Dorsolateral prefrontal cortex (tissue), 120 donors: ENCODE measurements at regions of chr7 and their contacts with region 1.

Region 1: GRCh38 chr7:87202705-87203104 is 16.8 kb downstream of the TMEM243 start:
- DNase-seq: no peak
- H3K4me3 ChIP-seq: no peak overlapping the region
- H3K27ac ChIP-seq: peak overlapping the region in 33 of 59 donors; percentile 4 to 63 (median 27)
- H3K27me3 ChIP-seq: no peaks in the 10 kb centered on the region
- CTCF ChIP-seq: no peak

Region 2: GRCh38 chr7:87219545-87220025 is 16.9 kb after region 1 on chr7 and contains the start of gene TMEM243:
- intact Hi-C with region 1: loop called in 1 of 2 experiments (anchors 2 kb)
- DNase-seq: peak; percentile 35 to 81 (median 57)
- H3K4me3 ChIP-seq: peak within 1 kb of the TSS; percentile 60 to 99 (median 90)
- H3K27ac ChIP-seq: peak within 1 kb of the TSS; percentile 28 to 90 (median 80)
- H3K27me3 ChIP-seq: no peaks in the 10 kb centered on the region
- CTCF ChIP-seq: peak in 15 of 56 donors; percentile 10 to 44 (median 29)
- total RNA-seq, gene TMEM243: 9.4 to 33.2 (median 21.5) TPM